CD4-positive, alpha-beta memory T cell (primary cell): ENCODE measurements at regions of chr3 and their contacts with region 1.

Region 1: GRCh38 chr3:9731206-9732079 is at the start of gene BRPF1:
- DNase-seq: peak; percentile 98 to 100 (median 98)
- H3K4me3 ChIP-seq: peak within 1 kb of the TSS; percentile 48 to 96
- H3K4me3 Mint-ChIP-seq: peak within 1 kb of the TSS; percentile 89 to 98 (median 93)
- H3K27ac ChIP-seq: peak within 1 kb of the TSS; percentile 77
- H3K27ac Mint-ChIP-seq: peak within 1 kb of the TSS; percentile 93 to 98 (median 95)
- H3K4me1 ChIP-seq: peaks cover 64% of the 10 kb centered on the region
- H3K4me1 Mint-ChIP-seq: peaks cover 47 to 75% (median 59%) of the 10 kb centered on the region in 4 donors
- H3K27me3 ChIP-seq: no peaks in the 10 kb centered on the region
- H3K27me3 Mint-ChIP-seq: no peaks in the 10 kb centered on the region
- total RNA-seq, gene BRPF1: 40.4 to 40.5 TPM

Region 2: DNA sequence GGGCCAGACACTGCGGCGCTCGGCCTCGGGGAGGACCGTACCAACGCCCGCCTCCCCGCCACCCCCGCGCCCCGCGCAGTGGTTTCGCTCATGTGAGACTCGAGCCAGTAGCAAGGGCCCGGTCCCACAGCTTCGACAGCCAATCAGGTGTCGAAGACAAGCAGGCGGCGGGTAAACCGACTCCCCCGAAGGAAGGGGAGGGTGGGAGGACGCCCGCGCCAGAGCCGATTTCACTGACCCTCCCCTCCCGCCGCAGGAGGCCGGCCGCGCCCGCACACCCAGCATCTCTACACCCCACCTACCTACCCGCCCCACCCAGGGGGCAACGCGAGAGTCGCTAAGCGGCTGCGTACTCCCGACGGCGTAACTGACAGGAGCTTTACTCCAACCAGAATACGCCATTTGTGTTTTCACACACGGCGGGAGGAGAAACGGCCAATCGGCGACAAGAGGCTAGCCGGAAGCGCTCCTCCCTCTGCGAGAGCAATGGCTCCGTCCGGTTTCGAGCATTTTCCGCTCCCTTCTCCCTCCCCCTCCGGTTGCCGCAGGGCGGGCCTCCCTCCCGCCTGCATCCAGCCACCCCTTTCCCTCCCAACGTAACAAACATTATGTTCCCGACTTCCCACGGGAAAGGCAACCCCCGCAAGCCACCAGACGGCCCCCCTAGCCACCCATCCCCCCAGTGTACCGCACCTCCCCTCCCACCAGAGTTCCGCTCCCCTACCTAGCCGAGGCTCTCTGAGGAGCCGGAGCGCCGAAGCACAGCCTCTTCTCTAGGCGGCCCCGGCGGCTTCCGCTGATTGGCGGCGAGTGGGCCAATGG is 334.5 kb before region 1 on chr3:
- CTCF ChIA-PET with region 1: no interaction called
- POLR2A ChIA-PET with region 1: interaction called, 5 read pairs
- intact Hi-C with region 1: loop called (anchors 1 kb)
- DNase-seq: peak; percentile 99 to 100 (median 100)
- H3K4me3 ChIP-seq: peak overlapping the region in 1 of 2 donors; percentile 71
- H3K4me3 Mint-ChIP-seq: peak overlapping the region; percentile 90 to 99 (median 96)
- H3K27ac ChIP-seq: peak overlapping the region; percentile 83
- H3K27ac Mint-ChIP-seq: peak overlapping the region; percentile 96 to 99 (median 99)
- H3K4me1 ChIP-seq: peaks cover 73% of the 10 kb centered on the region
- H3K4me1 Mint-ChIP-seq: peaks cover 49 to 87% (median 68%) of the 10 kb centered on the region in 4 donors
- H3K27me3 ChIP-seq: no peaks in the 10 kb centered on the region
- H3K27me3 Mint-ChIP-seq: peaks cover 0 to 3% of the 10 kb centered on the region in 2 donors

Region 3: DNA sequence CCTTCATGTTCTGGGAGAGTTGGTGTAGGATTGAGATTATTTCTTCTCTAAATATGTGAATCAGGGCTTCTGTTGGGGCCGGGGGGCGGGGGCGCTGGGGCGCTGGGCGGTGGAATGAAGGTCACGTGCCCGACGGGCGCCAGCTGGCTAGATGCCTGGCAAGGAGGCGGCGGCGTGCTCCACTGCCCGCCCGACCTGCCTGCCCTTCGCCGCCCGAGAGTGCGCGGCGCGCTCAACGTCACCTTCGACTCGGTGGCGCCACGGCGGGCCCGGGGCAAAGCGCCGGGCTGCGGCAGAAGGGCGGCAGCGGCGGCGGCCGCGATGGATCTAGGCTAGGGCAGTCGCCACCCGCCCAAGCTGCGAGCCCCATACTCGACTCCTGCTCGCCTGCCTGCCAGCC is 130.8 kb before region 1 on chr3:
- CTCF ChIA-PET with region 1: no interaction called
- POLR2A ChIA-PET with region 1: no interaction called
- intact Hi-C with region 1: no loop called
- DNase-seq: no peak
- H3K4me3 ChIP-seq: no peak overlapping the region
- H3K4me3 Mint-ChIP-seq: peak overlapping the region in 6 of 8 donors; percentile 16 to 79 (median 54)
- H3K27ac ChIP-seq: no peak overlapping the region
- H3K27ac Mint-ChIP-seq: peak overlapping the region in 1 of 7 donors; percentile 14
- H3K4me1 ChIP-seq: no peaks in the 10 kb centered on the region
- H3K4me1 Mint-ChIP-seq: peaks cover 0 to 2% (median under 1%) of the 10 kb centered on the region in 4 donors
- H3K27me3 ChIP-seq: no peaks in the 10 kb centered on the region
- H3K27me3 Mint-ChIP-seq: peaks cover 31 to 33% of the 10 kb centered on the region in 2 donors

Region 4: GRCh38 chr3:9715764-9716437 is 15.5 kb before region 1 on chr3:
- CTCF ChIA-PET with region 1: interaction called, 38 read pairs
- POLR2A ChIA-PET with region 1: interaction called, 4 read pairs
- intact Hi-C with region 1: no loop called
- DNase-seq: peak in 2 of 5 donors; percentile 20 to 47
- H3K4me3 ChIP-seq: no peak overlapping the region
- H3K4me3 Mint-ChIP-seq: no peak overlapping the region
- H3K27ac ChIP-seq: no peak overlapping the region
- H3K27ac Mint-ChIP-seq: peak overlapping the region in 2 of 7 donors; percentile 29 to 60
- H3K4me1 ChIP-seq: peaks cover 8% of the 10 kb centered on the region
- H3K4me1 Mint-ChIP-seq: peaks cover 9 to 15% (median 12%) of the 10 kb centered on the region in 4 donors
- H3K27me3 ChIP-seq: no peaks in the 10 kb centered on the region
- H3K27me3 Mint-ChIP-seq: peaks cover 1 to 5% of the 10 kb centered on the region in 2 donors

Region 5: GRCh38 chr3:9792405-9793160 is 61.1 kb after region 1 on chr3 and contains the starts of genes ARPC4 and TADA3:
- CTCF ChIA-PET with region 1: interaction called, 8 read pairs
- POLR2A ChIA-PET with region 1: interaction called, 38 read pairs
- intact Hi-C with region 1: loop called (anchors 1 kb)
- DNase-seq: peak; percentile 92 to 97 (median 96)
- H3K4me3 ChIP-seq: peak within 1 kb of the TSS; percentile 91 to 100
- H3K4me3 Mint-ChIP-seq: peak within 1 kb of the TSS; percentile 96 to 99 (median 98)
- H3K27ac ChIP-seq: peak within 1 kb of the TSS; percentile 99
- H3K27ac Mint-ChIP-seq: peak within 1 kb of the TSS; percentile 97 to 99 (median 99)
- H3K4me1 ChIP-seq: peaks cover 63% of the 10 kb centered on the region
- H3K4me1 Mint-ChIP-seq: peaks cover 47 to 80% (median 56%) of the 10 kb centered on the region in 4 donors
- H3K27me3 ChIP-seq: no peaks in the 10 kb centered on the region
- H3K27me3 Mint-ChIP-seq: no peaks in the 10 kb centered on the region
- total RNA-seq, gene ARPC4: 164 to 168 TPM
- total RNA-seq, gene TADA3: 37.6 to 41.4 TPM

Region 6: GRCh38 chr3:10142707-10143566 is 411.5 kb after region 1 on chr3:
- CTCF ChIA-PET with region 1: no interaction called
- POLR2A ChIA-PET with region 1: no interaction called
- intact Hi-C with region 1: loop called (anchors 5 kb)
- DNase-seq: peak in 3 of 5 donors; percentile 14 to 46 (median 18)
- H3K4me3 ChIP-seq: peak overlapping the region; percentile 55 to 95
- H3K4me3 Mint-ChIP-seq: peak overlapping the region; percentile 90 to 98 (median 95)
- H3K27ac ChIP-seq: peak overlapping the region; percentile 94
- H3K27ac Mint-ChIP-seq: peak overlapping the region; percentile 88 to 99 (median 96)
- H3K4me1 ChIP-seq: peaks cover 45% of the 10 kb centered on the region
- H3K4me1 Mint-ChIP-seq: peaks cover 22 to 58% (median 32%) of the 10 kb centered on the region in 4 donors
- H3K27me3 ChIP-seq: no peaks in the 10 kb centered on the region
- H3K27me3 Mint-ChIP-seq: no peaks in the 10 kb centered on the region